ENCODE measurements at regions of chr22 and their contacts with region 1.

Region 1: DNA sequence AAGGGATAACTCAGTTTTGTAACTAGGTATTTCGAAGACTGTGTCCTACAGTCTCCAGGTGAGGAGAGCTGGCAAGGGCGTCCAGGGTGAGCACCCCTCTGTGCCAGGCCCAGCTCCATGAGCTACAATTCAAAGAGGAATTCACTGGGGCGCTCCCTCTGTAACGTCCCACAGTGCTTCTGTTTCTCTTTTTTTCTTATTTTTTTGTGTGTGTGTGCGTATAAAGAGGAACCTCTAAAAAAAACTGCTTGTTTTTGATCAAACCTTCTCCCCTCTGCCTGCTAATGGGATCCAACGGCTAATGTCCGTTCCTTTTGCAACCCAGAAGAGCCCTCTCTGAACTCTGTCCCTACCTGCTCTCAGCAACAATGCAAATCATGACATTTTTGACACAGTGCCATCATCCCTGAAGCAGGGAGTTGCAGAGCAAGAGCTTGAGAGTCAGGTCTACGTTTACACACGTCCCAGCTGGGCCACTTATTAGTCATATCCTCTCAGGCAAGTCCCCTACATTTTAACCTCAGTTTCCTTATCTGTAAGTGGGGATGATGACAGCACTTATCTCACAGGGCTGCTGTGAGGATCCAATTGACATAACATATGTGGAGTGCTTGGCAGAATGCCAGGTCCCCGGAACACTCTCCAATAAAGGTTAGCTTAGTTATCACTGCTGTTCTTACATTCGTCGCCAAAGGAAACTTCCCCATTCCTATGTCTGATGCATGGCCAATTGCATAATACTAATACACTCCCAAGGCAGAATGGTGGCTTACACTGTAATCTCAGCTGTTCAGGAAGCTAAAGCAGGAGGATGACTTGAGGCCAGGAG is 16.9 kb downstream of the ASCC2 start:
- ATAC-seq: peak in 3 of 8 experiments; percentile 53 to 71 (median 55)
- H3K4me3 ChIP-seq: no peak overlapping the region
- H3K27ac ChIP-seq: no peak overlapping the region
- H3K4me1 ChIP-seq: no peaks in the 10 kb centered on the region

Region 2: DNA sequence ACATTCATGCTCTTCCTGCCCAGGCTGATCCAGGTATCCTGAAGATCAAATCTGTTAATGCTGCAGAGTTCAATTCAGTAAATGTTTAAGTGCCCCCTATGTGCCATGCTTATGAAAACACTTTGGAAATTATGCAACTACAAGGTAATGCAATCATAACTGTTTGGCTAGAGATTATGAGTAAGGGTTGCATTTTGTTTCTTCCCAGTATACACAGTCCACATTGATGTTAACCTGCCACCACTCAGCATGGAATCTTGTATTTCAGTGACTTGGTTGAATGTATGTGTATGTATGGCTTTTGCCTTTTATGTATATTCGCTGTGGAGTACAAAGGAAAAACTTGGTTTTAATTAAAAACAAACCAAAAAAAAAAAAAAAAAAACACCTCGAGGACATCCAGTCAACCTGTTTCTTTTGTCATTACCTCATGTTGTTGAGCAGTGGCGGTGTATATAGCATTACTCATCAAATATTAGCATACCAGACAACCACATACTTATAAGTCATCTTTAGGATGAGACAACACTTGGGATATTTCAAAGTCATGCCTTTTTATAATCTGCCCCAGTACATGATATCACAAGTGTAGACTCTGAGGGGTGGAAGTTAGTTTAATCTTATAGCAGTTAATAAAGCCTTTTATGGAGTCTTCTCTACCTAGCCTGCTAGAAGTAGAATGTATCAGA is 173.0 kb after region 1 on chr22:
- in situ Hi-C with region 1: loop called in 1 of 9 experiments (anchors 25 kb)
- ATAC-seq: peak in 5 of 8 experiments; percentile 45 to 86 (median 72)
- H3K4me3 ChIP-seq: no peak overlapping the region
- H3K27ac ChIP-seq: no peak overlapping the region
- H3K4me1 ChIP-seq: peaks cover 0 to 3% of the 10 kb centered on the region in 2 donors

Region 3: DNA sequence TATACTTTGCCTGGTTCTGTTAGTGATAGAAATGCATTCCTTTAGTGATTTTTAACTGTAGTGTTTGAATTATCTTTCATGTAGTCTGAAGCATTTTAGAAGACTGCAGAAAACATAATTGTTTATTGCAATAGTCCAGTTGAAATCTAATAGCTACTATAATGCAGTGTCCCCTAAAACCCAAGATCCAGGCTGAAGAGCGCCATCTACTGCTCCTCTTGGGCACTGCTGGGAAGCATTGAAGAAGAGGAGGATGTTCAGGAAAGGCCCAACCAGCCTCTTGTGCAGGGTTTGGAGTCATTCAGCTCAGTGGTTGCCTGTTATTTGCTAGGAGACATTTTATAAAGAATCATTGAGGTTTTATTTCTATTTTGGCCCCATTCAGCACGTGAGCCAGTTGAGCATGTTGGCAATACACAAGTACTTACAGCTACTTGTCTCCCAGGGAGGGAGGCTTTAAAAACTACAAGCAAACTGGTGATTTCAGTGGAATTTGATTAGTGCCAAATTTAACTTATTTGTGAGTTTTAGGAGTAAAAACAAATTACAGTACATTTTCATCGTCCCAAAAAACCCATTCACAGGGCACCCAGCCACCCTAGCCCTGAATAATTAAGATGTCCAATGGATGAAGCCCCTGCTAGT is 184.2 kb after region 1 on chr22:
- in situ Hi-C with region 1: loop called in 1 of 9 experiments (anchors 25 kb)
- ATAC-seq: peak; percentile 48 to 94 (median 82)
- H3K4me3 ChIP-seq: no peak overlapping the region
- H3K27ac ChIP-seq: no peak overlapping the region
- H3K4me1 ChIP-seq: peaks cover 0 to 23% of the 10 kb centered on the region in 2 donors